Activated CD4-positive, alpha-beta T cell treated with anti-CD3 and anti-CD28 coated beads for 36 hours (primary cell): ENCODE measurements at regions of chr1 and their contacts with region 1.

Region 1: GRCh38 chr1:42035830-42036604 is 117.2 kb upstream of the GUCA2B start:
- DNase-seq: peak; percentile 99
- ATAC-seq: peak; percentile 92
- H3K4me3 Mint-ChIP-seq: peak overlapping the region; percentile 76
- H3K27ac Mint-ChIP-seq: peak overlapping the region; percentile 72
- H3K4me1 Mint-ChIP-seq: peaks cover 35% of the 10 kb centered on the region
- H3K27me3 Mint-ChIP-seq: no peaks in the 10 kb centered on the region

Region 2: GRCh38 chr1:41639332-41639936 is 396.6 kb before region 1 on chr1:
- CTCF ChIA-PET with region 1: no interaction called
- POLR2A ChIA-PET with region 1: no interaction called
- intact Hi-C with region 1: loop called in 1 of 2 experiments (anchors 10 kb)
- DNase-seq: peak; percentile 84
- ATAC-seq: peak; percentile 83
- H3K4me3 Mint-ChIP-seq: peak overlapping the region; percentile 62
- H3K27ac Mint-ChIP-seq: no peak overlapping the region
- H3K4me1 Mint-ChIP-seq: peaks cover 13% of the 10 kb centered on the region
- H3K27me3 Mint-ChIP-seq: no peaks in the 10 kb centered on the region

Region 3: DNA sequence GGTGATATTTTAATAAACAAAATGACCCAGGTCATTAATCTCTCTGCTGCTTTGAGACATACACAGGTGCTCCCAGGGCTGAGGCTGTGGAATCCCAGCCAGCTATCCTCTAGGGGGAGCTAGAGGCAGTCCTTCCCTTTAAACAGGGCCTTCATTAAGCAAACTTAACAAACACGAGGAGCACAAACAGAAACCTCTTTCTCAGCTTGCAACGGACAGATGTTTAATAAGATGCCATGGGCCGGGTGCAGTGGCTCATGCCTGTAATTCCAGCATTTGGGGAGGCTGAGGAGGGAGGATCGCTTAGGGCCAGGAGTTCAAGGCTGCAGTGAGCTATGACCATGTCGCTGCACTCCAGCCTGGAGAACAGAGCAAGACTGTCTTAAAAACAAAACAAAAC is 224.0 kb before region 1 on chr1:
- CTCF ChIA-PET with region 1: interaction called, 7 read pairs
- POLR2A ChIA-PET with region 1: no interaction called
- intact Hi-C with region 1: loop called (anchors 1 to 10 kb)
- DNase-seq: peak; percentile 78
- ATAC-seq: peak; percentile 68
- H3K4me3 Mint-ChIP-seq: no peak overlapping the region
- H3K27ac Mint-ChIP-seq: no peak overlapping the region
- H3K4me1 Mint-ChIP-seq: peaks cover 49% of the 10 kb centered on the region
- H3K27me3 Mint-ChIP-seq: no peaks in the 10 kb centered on the region

Region 4: GRCh38 chr1:41891199-41891896 is 144.7 kb before region 1 on chr1:
- CTCF ChIA-PET with region 1: no interaction called
- POLR2A ChIA-PET with region 1: no interaction called
- intact Hi-C with region 1: loop called in 1 of 2 experiments (anchors 1 kb)
- DNase-seq: peak; percentile 72
- ATAC-seq: peak; percentile 96
- H3K4me3 Mint-ChIP-seq: peak overlapping the region; percentile 78
- H3K27ac Mint-ChIP-seq: peak overlapping the region; percentile 95
- H3K4me1 Mint-ChIP-seq: peaks cover 50% of the 10 kb centered on the region
- H3K27me3 Mint-ChIP-seq: no peaks in the 10 kb centered on the region

Region 5: GRCh38 chr1:42096554-42096953 is 60.5 kb after region 1 on chr1:
- CTCF ChIA-PET with region 1: no interaction called
- POLR2A ChIA-PET with region 1: no interaction called
- intact Hi-C with region 1: no loop called
- DNase-seq: no peak
- ATAC-seq: no peak
- H3K4me3 Mint-ChIP-seq: no peak overlapping the region
- H3K27ac Mint-ChIP-seq: no peak overlapping the region
- H3K4me1 Mint-ChIP-seq: no peaks in the 10 kb centered on the region
- H3K27me3 Mint-ChIP-seq: peaks cover 19% of the 10 kb centered on the region

Region 6: DNA sequence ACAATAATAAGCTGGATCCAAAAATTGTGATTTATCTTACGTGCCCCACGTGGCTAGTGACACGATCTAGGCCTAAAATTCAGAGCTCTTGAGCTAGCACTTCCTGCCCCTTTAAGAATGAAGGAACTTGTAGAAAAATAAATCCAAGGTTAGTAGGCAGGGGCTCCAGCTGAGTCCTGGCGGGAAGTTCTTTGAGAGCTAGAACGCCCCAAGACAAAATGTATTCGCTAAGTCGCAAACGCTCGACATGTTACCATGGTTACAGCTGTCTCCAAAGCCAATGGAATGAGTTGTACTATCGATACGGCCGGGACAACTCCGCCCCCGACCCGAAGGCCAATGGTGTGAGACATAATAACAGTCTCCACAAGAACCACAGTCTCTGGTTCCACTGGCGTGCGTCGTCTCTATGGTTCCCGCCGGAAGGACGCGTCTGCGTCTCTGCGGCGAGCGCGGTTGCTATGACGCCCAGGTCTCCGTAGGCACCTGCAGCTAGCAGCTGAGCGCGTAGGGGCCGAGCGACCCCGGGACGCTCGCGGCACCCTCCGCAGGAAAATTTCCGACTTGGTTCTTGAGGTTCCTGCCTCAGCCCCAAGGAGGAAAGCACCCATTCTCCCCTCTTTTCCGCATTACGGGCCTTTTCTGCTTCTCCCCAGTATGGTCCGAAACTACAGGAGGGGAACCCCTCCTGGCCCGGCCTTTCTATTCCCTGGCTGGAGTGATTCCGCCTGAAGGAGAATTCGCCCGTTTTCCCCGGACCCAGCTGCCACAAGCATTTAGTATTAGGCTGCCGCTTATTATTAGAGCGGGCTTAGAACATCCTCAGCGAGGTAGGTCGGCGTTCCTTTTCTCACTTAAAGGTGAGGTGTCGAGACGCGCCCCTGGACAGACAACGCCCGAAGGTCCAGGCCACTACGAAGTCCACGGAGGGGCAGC is 427.1 kb after region 1 on chr1 and contains the start of gene CCDC30:
- CTCF ChIA-PET with region 1: no interaction called
- POLR2A ChIA-PET with region 1: no interaction called
- intact Hi-C with region 1: loop called in 1 of 2 experiments (anchors 2 kb)
- DNase-seq: peak; percentile 97
- ATAC-seq: peak; percentile 100
- H3K4me3 Mint-ChIP-seq: peak within 1 kb of the TSS; percentile 77
- H3K27ac Mint-ChIP-seq: peak within 1 kb of the TSS; percentile 73
- H3K4me1 Mint-ChIP-seq: peaks cover 31% of the 10 kb centered on the region
- H3K27me3 Mint-ChIP-seq: no peaks in the 10 kb centered on the region
- total RNA-seq, gene CCDC30: 1.3 to 2.3 TPM